Vagina (tissue), 2 donors: ENCODE measurements at regions of chr18 and their contacts with region 1.

Region 1: GRCh38 chr18:22983175-22983574 is 50.0 kb downstream of the RBBP8 start:
- DNase-seq: no peak
- H3K4me3 ChIP-seq: no peak overlapping the region
- H3K27ac ChIP-seq: no peak overlapping the region
- H3K4me1 ChIP-seq: peaks cover 10% of the 10 kb centered on the region
- H3K27me3 ChIP-seq: no peaks in the 10 kb centered on the region
- CTCF ChIP-seq: peak; percentile 28 to 52 (median 37)
- POLR2A ChIP-seq: no peak

Region 2: GRCh38 chr18:22800551-22800951 is 182.6 kb before region 1 on chr18:
- intact Hi-C with region 1: loop called (anchors 10 kb)
- DNase-seq: no peak
- H3K4me3 ChIP-seq: no peak overlapping the region
- H3K27ac ChIP-seq: peak overlapping the region; percentile 66
- H3K4me1 ChIP-seq: peaks cover 7% of the 10 kb centered on the region
- H3K27me3 ChIP-seq: no peaks in the 10 kb centered on the region
- CTCF ChIP-seq: no peak
- POLR2A ChIP-seq: no peak